RWPE1 (cell line): ENCODE measurements at regions of chr15 and their contacts with region 1.

Region 1: GRCh38 chr15:100338971-100339444 is 2.8 kb downstream of the ADAMTS17 start:
- DNase-seq: peak; percentile 52
- H3K27ac ChIP-seq: no peak overlapping the region; the same call in 1 of the 2 replicates
- CTCF ChIP-seq: peak; percentile 67

Region 2: GRCh38 chr15:100234158-100235029 is 104.6 kb before region 1 on chr15:
- CTCF ChIA-PET with region 1: no interaction called
- POLR2A ChIA-PET with region 1: no interaction called
- DNase-seq: no peak
- H3K27ac ChIP-seq: peak overlapping the region; percentile 6
- CTCF ChIP-seq: no peak

Region 3: DNA sequence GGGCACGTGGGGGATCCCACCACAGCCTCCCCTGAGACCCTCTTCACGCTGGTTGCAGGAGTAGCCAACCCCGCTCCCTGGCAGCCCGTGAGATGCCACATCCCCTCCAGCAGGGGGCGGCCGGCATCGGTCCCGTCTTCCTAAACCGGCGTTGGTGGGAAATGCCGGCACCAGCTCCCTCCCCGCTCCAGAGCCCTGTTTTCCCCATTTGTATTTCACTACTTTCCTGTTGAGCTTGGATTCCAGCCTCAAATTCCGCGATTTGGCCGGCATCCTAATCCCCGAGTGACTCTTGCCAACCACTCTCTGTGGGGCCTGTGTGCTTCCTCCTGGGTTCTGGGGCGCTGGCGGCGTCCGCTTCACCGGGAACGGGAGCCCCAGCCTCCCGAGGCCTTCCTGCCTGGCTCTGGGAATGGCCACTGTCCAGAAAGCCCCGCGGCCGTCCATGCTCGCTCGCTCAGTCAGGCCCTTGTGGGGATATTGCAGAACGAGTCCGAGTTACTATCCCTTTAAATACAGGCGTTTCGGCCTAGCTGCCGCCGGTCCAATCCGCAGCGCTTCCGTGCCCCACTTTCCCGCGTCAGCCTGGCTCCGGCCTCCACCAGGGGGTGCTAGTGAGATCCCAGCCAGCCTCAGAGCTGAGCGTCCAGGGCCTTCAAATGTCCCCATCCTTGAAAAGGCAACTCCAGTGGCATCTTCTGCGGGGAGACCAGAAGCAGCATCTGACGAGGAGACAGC is 10.9 kb after region 1 on chr15:
- CTCF ChIA-PET with region 1: interaction called, 23 read pairs
- POLR2A ChIA-PET with region 1: no interaction called
- DNase-seq: peak; percentile 89
- H3K27ac ChIP-seq: peak overlapping the region; percentile 92
- CTCF ChIP-seq: peak; percentile 96